ENCODE measurements at regions of chr17 and their contacts with region 1.

Region 1: DNA sequence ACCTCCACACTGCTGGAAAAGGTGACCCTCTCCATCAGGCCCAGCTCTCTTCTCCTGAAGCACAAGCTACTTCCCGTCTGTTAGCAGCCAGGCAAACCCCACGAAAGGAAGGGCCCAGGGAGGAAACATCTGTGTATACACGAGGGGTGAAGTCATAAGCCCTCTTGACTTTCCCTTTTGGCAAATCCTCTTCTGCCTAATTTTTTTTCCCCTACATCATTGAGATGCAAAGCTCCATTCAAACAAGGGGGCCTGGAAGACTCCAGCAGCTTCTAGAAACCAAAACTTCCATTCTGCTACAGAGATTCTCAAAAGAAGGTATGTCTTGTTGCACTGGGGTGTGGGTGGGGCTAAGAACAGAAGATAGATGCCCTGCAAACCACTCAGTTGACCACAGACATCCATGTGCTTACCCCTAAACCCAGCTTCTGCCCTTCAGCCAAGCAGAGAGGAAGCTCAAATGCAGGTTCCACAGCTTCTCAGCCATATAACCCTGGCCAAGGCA is 145.6 kb upstream of the RCVRN start:
- DNase-seq: peak; percentile 27
- ATAC-seq: no peak
- H3K4me3 ChIP-seq: no peak overlapping the region
- H3K4me3 Mint-ChIP-seq: peak overlapping the region; percentile 44
- H3K27ac ChIP-seq: no peak overlapping the region
- H3K27ac Mint-ChIP-seq: peak overlapping the region; percentile 47
- H3K4me1 ChIP-seq: peaks cover 33 to 48% of the 10 kb centered on the region in 2 donors
- H3K4me1 Mint-ChIP-seq: peaks cover 53% of the 10 kb centered on the region
- H3K27me3 ChIP-seq: peaks cover 0 to 4% (median 0%) of the 10 kb centered on the region in 4 experiments
- H3K27me3 Mint-ChIP-seq: no peaks in the 10 kb centered on the region
- CTCF ChIP-seq: no peak

Region 2: GRCh38 chr17:9987779-9988574 is 62.7 kb before region 1 on chr17:
- CTCF ChIA-PET with region 1: interaction called, 3 read pairs
- POLR2A ChIA-PET with region 1: no interaction called
- intact Hi-C with region 1: loop called (anchors 5 kb)
- DNase-seq: peak; percentile 56
- ATAC-seq: peak; percentile 57
- H3K4me3 ChIP-seq: no peak overlapping the region
- H3K4me3 Mint-ChIP-seq: no peak overlapping the region
- H3K27ac ChIP-seq: no peak overlapping the region
- H3K27ac Mint-ChIP-seq: no peak overlapping the region
- H3K4me1 ChIP-seq: peaks cover 5% of the 10 kb centered on the region in 2 donors
- H3K4me1 Mint-ChIP-seq: peaks cover 11% of the 10 kb centered on the region
- H3K27me3 ChIP-seq: no peaks in the 10 kb centered on the region
- H3K27me3 Mint-ChIP-seq: no peaks in the 10 kb centered on the region
- CTCF ChIP-seq: peak; percentile 90

Region 3: DNA sequence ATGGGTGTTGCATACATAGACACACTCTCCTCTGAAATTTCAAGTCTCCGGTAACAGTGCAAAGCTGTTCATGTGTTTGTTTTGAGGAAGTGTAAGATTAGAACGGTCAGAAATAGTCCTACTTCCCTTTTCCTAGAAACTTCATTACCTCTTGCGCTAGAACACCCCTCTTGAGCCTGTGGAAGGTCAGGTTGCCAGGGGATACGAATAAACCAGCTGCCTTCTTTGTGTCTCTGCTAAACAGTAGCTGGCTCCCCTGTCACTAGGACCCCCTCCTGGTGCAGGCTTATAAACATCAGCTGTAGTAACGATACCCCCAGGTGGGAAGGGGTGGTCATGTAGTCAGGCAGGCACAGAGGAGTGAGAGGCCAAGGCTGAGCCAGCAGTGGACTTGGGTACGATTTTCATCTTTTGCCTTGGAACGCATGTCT is 32.2 kb before region 1 on chr17:
- CTCF ChIA-PET with region 1: no interaction called
- POLR2A ChIA-PET with region 1: no interaction called
- intact Hi-C with region 1: loop called (anchors 5 kb)
- DNase-seq: peak; percentile 74
- ATAC-seq: peak; percentile 78
- H3K4me3 ChIP-seq: peak overlapping the region in 1 of 5 experiments; percentile 42
- H3K4me3 Mint-ChIP-seq: peak overlapping the region; percentile 66
- H3K27ac ChIP-seq: peak overlapping the region; percentile 58 to 61
- H3K27ac Mint-ChIP-seq: peak overlapping the region; percentile 17
- H3K4me1 ChIP-seq: peaks cover 30 to 52% of the 10 kb centered on the region in 2 donors
- H3K4me1 Mint-ChIP-seq: peaks cover 47% of the 10 kb centered on the region
- H3K27me3 ChIP-seq: no peaks in the 10 kb centered on the region
- H3K27me3 Mint-ChIP-seq: no peaks in the 10 kb centered on the region
- CTCF ChIP-seq: no peak